Activated CD4-positive, alpha-beta memory T cell treated with anti-CD3 and anti-CD28 coated beads for 36 hours (primary cell): ENCODE measurements at regions of chr7 and their contacts with region 1.

Region 1: DNA sequence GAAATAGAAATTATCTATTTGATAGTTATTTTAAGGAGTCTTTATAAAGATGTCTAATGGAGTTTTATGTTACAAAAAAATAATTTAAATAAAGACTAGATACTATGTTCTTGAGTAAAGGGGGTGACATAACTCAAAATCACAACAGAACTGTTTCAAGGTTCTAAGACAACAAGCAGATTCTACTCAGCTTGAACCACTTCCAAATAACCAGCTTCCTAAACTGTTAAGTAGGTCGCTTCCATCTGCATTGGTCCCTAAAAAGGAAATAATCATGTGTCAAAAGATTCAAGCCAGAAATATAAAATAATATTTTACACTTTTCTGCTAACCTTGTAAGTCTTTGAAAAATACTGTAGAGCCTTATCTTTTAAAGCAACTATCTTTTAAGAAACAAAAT is 14.1 kb downstream of the SEM1 start:
- DNase-seq: no peak
- H3K4me3 Mint-ChIP-seq: no peak overlapping the region
- H3K27ac Mint-ChIP-seq: no peak overlapping the region
- H3K4me1 Mint-ChIP-seq: peaks cover 40% of the 10 kb centered on the region
- H3K27me3 Mint-ChIP-seq: no peaks in the 10 kb centered on the region

Region 2: DNA sequence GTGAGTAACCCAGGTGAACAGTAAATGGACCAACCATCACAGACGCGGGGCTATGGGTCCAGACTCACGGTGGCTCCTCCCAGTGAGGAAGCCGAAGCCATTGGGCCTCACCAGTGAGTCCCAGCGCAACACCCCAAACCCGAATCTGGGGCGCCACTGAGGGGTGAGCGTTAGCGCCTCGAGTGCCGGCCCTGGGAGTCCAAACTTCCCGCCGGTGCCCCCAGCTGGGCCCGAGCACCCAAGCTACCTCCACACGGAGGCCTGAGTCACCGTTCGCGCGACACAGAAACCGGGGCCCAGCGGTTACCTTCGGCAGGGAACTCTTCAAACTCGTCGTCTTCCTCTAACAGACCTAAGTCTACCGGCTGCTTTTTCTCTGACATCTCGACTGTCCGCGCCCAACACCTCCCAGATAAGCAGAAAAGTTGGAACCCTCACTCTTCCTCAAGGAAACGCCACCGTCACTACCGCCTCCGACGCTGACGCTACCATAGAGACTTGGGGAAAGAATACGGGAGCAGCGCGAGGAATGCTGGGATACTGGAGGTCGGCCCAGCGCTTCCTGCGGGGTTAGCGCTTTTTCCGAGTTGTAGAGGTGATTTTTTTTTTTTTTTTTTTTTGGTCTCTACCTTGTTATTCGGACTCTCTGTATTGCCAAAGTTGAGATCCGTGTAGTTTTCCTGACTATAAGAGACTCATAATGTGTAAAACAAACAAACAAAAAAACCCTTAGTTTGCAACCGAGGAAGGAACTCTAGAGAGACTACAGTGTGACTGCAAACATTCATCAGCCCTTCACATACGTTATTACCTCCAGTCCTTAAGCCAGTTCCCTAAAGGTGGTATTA is 14.0 kb after region 1 on chr7 and contains the start of gene SEM1:
- CTCF ChIA-PET with region 1: interaction called, 3 read pairs
- POLR2A ChIA-PET with region 1: interaction called, 4 read pairs
- intact Hi-C with region 1: loop called (anchors 2 kb)
- DNase-seq: peak; percentile 76
- H3K4me3 Mint-ChIP-seq: peak within 1 kb of the TSS; percentile 98
- H3K27ac Mint-ChIP-seq: peak within 1 kb of the TSS; percentile 96
- H3K4me1 Mint-ChIP-seq: peaks cover 23% of the 10 kb centered on the region
- H3K27me3 Mint-ChIP-seq: peaks cover 2% of the 10 kb centered on the region
- total RNA-seq, gene SEM1: 41.6 to 42.4 TPM